ENCODE measurements at regions of chr9 and their contacts with region 1.

Region 1: DNA sequence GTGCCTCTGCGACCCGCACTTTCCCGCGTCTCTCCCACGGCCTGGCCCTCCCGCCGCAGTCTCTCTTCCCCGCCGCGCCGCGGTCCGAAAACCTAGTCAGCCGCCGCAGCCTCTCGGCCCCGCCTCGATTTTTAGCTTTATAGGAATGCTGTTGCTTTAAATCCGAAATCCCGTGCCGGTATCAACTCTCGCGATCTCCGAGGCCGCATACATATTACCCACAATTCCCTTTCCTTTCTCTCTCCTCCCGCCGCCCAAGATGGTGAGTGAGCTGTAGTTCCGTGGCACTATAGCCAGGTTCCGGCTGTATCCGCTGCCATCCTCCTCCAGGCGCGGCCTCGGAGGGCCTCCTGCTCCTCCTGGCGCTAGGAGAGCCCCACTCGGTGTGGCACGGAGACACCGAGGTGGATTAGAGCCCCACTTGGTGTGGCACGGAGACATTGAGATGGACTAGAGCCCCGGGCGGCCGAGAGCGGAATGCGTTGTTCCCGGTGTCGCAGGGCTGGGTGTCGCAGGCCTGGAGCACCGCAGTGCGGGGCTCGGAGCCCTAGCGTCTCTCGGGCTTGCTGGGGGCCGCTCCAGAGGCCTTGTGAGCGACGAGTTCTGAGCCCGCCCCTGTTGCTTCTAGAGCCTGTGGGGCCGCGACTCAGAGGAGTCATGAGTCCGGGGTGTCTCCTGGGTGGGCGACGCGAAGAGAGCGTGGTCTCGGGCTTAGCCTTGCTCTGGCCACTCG is at the starts of genes MED22 and RPL7A:
- DNase-seq: peak; percentile 72 to 97 (median 90)
- ATAC-seq: peak; percentile 87 to 88
- H3K4me3 Mint-ChIP-seq: peak within 1 kb of the TSS; percentile 97 to 100 (median 99)
- H3K27ac Mint-ChIP-seq: peak within 1 kb of the TSS; percentile 95 to 99 (median 98)
- H3K4me1 Mint-ChIP-seq: peaks cover 18 to 46% (median 42%) of the 10 kb centered on the region in 4 donors
- H3K27me3 Mint-ChIP-seq: no peaks in the 10 kb centered on the region
- polyA plus RNA-seq, gene MED22: 10.3 to 20.6 (median 17.5) TPM
- polyA plus RNA-seq, gene RPL7A: 1,183 to 1,387 (median 1,313) TPM

Region 2: DNA sequence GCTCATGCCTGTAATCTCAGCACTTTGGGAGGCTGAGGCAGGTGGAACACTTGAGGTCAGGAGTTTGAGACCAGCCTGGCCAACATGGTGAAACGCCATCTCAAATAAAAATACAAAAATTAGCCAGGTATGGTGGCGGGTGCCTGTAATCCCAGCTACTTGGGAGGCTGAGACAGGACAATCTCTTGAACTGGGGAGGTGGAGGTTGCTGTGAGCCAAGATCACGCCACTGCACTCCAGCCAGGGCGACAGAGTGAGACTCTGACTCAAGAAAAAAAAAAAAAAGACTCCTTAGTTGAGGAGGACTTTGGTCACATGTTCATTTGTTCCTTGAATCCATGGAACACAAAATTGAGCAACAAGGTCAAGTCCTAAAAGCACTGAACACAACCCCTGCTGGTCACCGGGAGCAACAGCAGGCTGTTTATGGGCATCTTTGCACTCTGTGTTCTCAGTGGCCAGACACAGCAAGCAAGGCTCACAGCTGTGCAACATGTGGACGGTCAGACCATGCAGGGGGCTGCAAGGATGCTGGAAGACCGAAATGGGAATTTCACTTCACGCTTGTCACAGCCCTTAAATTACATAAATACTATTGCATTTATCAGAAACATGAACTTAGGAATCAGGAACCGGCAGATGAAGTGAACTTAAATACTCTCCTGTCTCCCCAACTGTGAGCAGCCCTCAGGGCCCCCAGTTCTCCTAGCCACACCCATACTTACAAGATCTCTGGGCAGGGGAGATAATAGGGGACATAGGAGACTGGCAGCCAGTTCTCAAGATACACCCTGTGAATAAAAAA is 187.2 kb before region 1 on chr9:
- POLR2A ChIA-PET with region 1: no interaction called
- DNase-seq: peak in 3 of 10 donors; percentile 29 to 35 (median 33)
- ATAC-seq: peak; percentile 76 to 81
- H3K4me3 Mint-ChIP-seq: peak overlapping the region in 4 of 10 donors; percentile 33 to 71 (median 48)
- H3K27ac Mint-ChIP-seq: peak overlapping the region in 2 of 10 donors; percentile 14 to 31
- H3K4me1 Mint-ChIP-seq: peaks cover 1 to 15% (median 7%) of the 10 kb centered on the region in 4 donors
- H3K27me3 Mint-ChIP-seq: peaks cover 0 to 4% (median 2%) of the 10 kb centered on the region in 5 donors

Region 3: DNA sequence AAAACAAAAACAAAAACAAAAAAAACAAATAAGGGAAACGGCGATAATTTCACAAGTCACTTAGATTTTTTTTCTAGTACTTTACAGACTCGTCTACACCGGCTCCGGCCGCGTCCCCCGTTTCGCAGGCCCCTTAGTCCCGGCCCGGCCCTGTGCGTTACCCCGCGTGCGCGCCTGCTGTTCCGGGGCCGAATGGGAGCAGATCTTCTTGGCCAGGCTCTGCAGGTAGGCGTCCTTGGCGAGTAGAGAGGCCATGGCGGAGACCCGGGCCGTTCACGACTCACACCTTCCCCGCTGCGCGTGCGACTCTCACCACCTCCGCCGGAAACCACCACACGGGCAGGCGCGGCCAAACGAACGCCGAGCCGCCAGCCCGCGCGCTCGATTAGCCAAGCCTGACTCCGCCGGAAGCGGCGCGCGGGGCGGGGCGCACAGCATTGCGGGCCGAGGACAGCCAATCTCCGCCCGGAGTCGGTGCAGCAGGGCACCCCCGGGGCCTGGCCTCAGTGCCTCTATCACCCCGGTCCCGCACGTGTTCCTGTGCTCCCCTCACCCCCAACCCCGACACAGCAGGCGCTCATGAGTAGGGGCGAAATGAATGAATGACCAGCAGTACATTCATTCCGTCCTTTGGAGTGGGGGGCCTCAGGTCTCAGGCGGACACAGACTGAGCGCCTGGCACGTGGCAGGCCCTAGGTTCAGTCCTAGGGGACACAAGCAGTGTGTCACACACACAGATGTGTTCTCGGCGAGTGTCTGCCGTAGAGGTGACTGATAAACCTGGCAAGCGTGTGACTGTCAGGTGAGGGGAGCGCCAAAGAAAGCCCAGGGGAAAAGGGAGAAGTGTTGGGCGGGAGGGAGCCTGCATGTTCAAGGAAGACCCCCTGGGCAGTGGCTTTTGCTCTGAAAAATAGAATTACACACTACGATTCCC is 12.0 kb before region 1 on chr9 and contains the start of gene SURF6:
- POLR2A ChIA-PET with region 1: interaction called, 16 read pairs
- DNase-seq: peak; percentile 88 to 94 (median 92)
- ATAC-seq: peak; percentile 93 to 95
- H3K4me3 Mint-ChIP-seq: peak within 1 kb of the TSS; percentile 90 to 98 (median 96)
- H3K27ac Mint-ChIP-seq: peak within 1 kb of the TSS; percentile 89 to 98 (median 96)
- H3K4me1 Mint-ChIP-seq: peaks cover 22 to 65% (median 60%) of the 10 kb centered on the region in 4 donors
- H3K27me3 Mint-ChIP-seq: no peaks in the 10 kb centered on the region
- polyA plus RNA-seq, gene SURF6: 4.9 to 16.9 (median 10.1) TPM

Region 4: GRCh38 chr9:133368249-133368881 is 20.2 kb after region 1 on chr9:
- POLR2A ChIA-PET with region 1: interaction called, 106 read pairs
- DNase-seq: no peak
- ATAC-seq: no peak
- H3K4me3 Mint-ChIP-seq: peak overlapping the region; percentile 20 to 89 (median 81)
- H3K27ac Mint-ChIP-seq: peak overlapping the region; percentile 83 to 99 (median 96)
- H3K4me1 Mint-ChIP-seq: peaks cover 41 to 91% (median 69%) of the 10 kb centered on the region in 4 donors
- H3K27me3 Mint-ChIP-seq: no peaks in the 10 kb centered on the region

Region 5: GRCh38 chr9:133375724-133376654 is 27.8 kb after region 1 on chr9 and contains the starts of genes STKLD1 and SURF4:
- POLR2A ChIA-PET with region 1: interaction called, 106 read pairs
- DNase-seq: peak; percentile 86 to 94 (median 92)
- ATAC-seq: peak; percentile 83
- H3K4me3 Mint-ChIP-seq: peak within 1 kb of the TSS; percentile 87 to 98 (median 94)
- H3K27ac Mint-ChIP-seq: peak within 1 kb of the TSS; percentile 89 to 97 (median 94)
- H3K4me1 Mint-ChIP-seq: peaks cover 20 to 42% (median 40%) of the 10 kb centered on the region in 4 donors
- H3K27me3 Mint-ChIP-seq: no peaks in the 10 kb centered on the region
- polyA plus RNA-seq, gene STKLD1: 0.35 to 2.3 TPM in 2 of 3 donors, not detected in the other
- polyA plus RNA-seq, gene SURF4: 107 to 146 (median 122) TPM

Measured in naive thymus-derived CD8-positive, alpha-beta T cell (primary cell).